AG04450 (cell line): ENCODE measurements at regions of chr1 and their contacts with region 1.

Region 1: DNA sequence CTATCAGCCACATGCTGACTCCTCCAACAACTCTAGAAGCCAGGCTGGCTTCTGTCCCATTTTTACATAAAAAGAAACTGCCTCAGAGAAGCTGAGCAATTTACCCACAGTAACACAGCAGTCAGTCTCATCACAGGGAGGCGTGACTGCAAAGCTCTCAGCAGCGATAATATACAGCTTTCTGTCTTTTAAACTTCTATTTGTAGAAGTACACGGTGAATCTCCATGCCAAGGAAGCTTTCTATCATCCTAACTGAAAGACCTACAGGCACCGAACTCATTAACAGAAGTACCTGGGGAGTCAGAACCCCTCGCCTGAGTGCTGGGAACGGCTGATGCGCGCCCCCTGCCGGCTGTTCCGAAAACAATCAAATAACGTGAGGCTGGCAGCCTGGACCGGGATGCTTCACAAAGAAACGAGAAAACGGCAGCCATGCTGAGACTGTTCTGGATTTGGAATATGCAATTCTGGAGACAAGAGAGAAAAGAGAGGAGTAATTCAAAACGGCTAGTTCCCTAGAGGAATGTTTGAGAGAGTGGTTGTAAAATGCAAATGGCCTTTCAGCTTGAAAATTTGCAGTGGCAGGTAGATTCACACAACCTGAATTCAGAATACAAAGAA is 43.5 kb upstream of the RAB4A start:
- DNase-seq: no peak
- H3K4me3 ChIP-seq: no peak overlapping the region
- H3K27ac ChIP-seq: no peak overlapping the region
- H3K27me3 ChIP-seq: peaks cover 14% of the 10 kb centered on the region
- CTCF ChIP-seq: peak; percentile 83

Region 2: GRCh38 chr1:228664399-228664914 is 563.0 kb before region 1 on chr1:
- CTCF ChIA-PET with region 1: interaction called, 74 read pairs
- POLR2A ChIA-PET with region 1: no interaction called
- DNase-seq: peak; percentile 13
- H3K4me3 ChIP-seq: no peak overlapping the region
- H3K27ac ChIP-seq: no peak overlapping the region
- H3K27me3 ChIP-seq: peaks cover 5% of the 10 kb centered on the region
- CTCF ChIP-seq: peak; percentile 79

Region 3: DNA sequence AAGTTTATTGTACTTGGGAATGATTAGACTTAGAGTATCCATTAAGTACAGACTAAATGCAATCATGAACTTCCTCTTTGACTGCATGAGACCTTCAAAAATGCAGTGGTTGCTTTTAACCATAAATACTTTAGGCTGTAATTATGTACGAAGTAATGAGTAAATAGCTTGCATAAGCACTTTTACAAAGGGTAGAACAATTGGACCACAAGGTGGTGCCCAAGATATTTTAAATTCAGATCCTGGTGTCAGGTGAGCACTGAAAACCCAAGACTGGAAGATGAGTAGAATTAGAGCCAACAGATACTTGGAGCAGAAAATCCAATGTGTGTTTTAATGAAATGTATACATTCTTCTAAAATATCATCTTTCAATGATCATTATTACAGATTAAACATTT is 535.5 kb before region 1 on chr1:
- CTCF ChIA-PET with region 1: interaction called, 54 read pairs
- POLR2A ChIA-PET with region 1: no interaction called
- DNase-seq: no peak
- H3K4me3 ChIP-seq: no peak overlapping the region
- H3K27ac ChIP-seq: no peak overlapping the region
- H3K27me3 ChIP-seq: no peaks in the 10 kb centered on the region
- CTCF ChIP-seq: peak; percentile 40

Region 4: DNA sequence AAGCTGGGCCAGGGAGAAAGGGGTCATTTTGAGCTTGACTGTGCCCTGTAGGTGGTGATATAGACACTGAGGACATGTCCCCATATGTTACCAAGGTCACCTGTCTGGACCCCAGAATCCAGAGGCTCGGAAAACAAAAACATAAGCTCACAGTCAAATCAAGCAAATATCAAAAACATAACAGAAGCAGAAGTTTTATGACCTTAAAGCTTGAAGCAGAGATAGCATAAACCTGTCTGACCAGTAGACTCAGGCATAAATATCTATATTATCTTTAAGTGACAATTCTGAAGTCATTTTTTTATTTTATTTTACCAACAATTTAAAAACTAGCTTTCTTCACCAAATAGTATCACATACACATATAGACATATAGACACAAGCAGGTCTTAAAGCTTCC is 525.0 kb before region 1 on chr1:
- CTCF ChIA-PET with region 1: interaction called, 12 read pairs
- POLR2A ChIA-PET with region 1: no interaction called
- DNase-seq: no peak
- H3K4me3 ChIP-seq: no peak overlapping the region
- H3K27ac ChIP-seq: no peak overlapping the region
- H3K27me3 ChIP-seq: no peaks in the 10 kb centered on the region
- CTCF ChIP-seq: no peak

Region 5: GRCh38 chr1:228734881-228735801 is 492.3 kb before region 1 on chr1 and contains the start of gene RHOU:
- CTCF ChIA-PET with region 1: interaction called, 49 read pairs
- POLR2A ChIA-PET with region 1: no interaction called
- DNase-seq: no peak
- H3K4me3 ChIP-seq: peak within 1 kb of the TSS; percentile 63
- H3K27ac ChIP-seq: no peak within 1 kb of the TSS
- H3K27me3 ChIP-seq: peaks cover 37% of the 10 kb centered on the region
- CTCF ChIP-seq: peak; percentile 39; the same call in 1 of the 2 replicates
- polyA plus RNA-seq, gene RHOU: 1.4 and 1.6 TPM in 2 replicates

Region 6: GRCh38 chr1:229209816-229210215 is 17.6 kb before region 1 on chr1:
- CTCF ChIA-PET with region 1: interaction called, 23 read pairs
- POLR2A ChIA-PET with region 1: no interaction called
- DNase-seq: peak; percentile 78
- H3K4me3 ChIP-seq: no peak overlapping the region
- H3K27ac ChIP-seq: peak overlapping the region; percentile 85
- H3K27me3 ChIP-seq: no peaks in the 10 kb centered on the region
- CTCF ChIP-seq: no peak

Region 7: GRCh38 chr1:229296541-229296941 is 69.1 kb after region 1 on chr1:
- CTCF ChIA-PET with region 1: no interaction called
- POLR2A ChIA-PET with region 1: no interaction called
- DNase-seq: peak; percentile 45
- H3K4me3 ChIP-seq: no peak overlapping the region
- H3K27ac ChIP-seq: no peak overlapping the region
- H3K27me3 ChIP-seq: no peaks in the 10 kb centered on the region
- CTCF ChIP-seq: no peak

Region 8: DNA sequence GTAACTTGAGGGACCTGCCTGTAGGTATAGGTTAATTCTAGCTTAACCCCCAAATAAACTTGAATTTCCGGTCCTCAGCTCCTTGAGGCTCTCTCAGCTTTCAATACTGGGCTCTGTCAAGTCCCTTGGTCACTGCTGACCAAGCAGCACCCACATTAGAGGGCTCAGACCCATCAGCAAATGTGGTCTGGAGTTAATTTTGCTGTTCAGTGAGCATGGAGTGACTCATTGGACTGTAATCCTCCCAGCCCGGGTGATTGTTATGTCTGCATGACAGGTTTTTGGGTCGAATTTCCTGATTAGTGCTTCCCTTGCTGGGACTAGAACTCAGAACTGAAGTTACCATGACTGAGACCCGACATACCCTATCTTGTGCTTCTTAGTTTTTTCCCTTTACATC is 529.3 kb after region 1 on chr1:
- CTCF ChIA-PET with region 1: no interaction called
- POLR2A ChIA-PET with region 1: no interaction called
- DNase-seq: no peak
- H3K4me3 ChIP-seq: no peak overlapping the region
- H3K27ac ChIP-seq: no peak overlapping the region
- H3K27me3 ChIP-seq: no peaks in the 10 kb centered on the region
- CTCF ChIP-seq: no peak